IMR-90 (cell line): ENCODE measurements at regions of chr4 and their contacts with region 1.

Region 1: GRCh38 chr4:132240081-132240480 is 909.0 kb upstream of the PCDH10 start:
- DNase-seq: no peak
- ATAC-seq: no peak
- H3K4me3 ChIP-seq: no peak overlapping the region
- H3K27ac ChIP-seq: no peak overlapping the region
- H3K4me1 ChIP-seq: no peaks in the 10 kb centered on the region
- H3K27me3 ChIP-seq: no peaks in the 10 kb centered on the region
- CTCF ChIP-seq: no peak
- POLR2A ChIP-seq: no peak
- RAD21 ChIP-seq: no peak

Region 2: DNA sequence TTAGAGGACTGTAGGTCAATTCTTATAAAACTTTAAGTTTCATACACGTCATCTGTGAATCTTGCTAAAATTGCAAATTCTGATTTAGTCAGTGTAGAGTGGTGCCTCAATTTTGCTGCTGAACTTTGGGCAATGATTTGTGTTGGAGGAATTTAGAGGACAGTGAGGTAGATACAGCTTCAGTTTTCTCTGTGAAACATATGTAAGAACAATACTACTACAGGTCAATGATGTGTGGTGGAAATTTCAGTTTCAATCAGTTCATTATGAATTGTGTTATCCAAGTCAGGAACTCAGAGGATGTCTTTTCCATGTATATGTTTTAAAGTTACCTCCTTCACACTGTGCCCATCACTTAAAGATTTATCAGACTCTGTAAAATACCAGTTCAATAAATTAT is 688.8 kb before region 1 on chr4:
- CTCF ChIA-PET with region 1: no interaction called
- POLR2A ChIA-PET with region 1: no interaction called
- dilution Hi-C with region 1: no loop called
- in situ Hi-C with region 1: no loop called
- intact Hi-C with region 1: no loop called
- DNase-seq: no peak
- ATAC-seq: no peak
- H3K4me3 ChIP-seq: no peak overlapping the region
- H3K27ac ChIP-seq: no peak overlapping the region
- H3K4me1 ChIP-seq: no peaks in the 10 kb centered on the region
- H3K27me3 ChIP-seq: no peaks in the 10 kb centered on the region
- CTCF ChIP-seq: no peak
- POLR2A ChIP-seq: no peak
- RAD21 ChIP-seq: no peak

Region 3: DNA sequence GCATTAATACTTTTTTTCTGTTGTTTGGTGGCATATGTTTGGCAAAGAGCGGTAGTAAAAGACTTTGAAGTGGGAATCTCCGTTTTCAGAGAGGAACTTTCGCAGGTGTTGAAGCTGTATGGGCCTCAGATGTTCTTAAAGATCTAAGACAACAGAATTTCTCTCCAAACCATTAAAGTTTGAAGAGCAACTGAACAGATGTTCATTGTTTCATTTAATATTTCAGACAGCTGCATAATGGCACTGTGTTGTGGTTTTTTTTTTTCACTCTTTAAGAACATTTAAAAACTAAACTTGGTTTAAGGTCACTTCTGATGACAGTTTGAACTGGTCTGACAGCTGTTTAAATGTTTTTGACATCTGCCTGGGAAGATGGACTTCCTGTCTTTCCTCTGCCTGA is 26.3 kb after region 1 on chr4:
- CTCF ChIA-PET with region 1: no interaction called
- POLR2A ChIA-PET with region 1: no interaction called
- dilution Hi-C with region 1: no loop called
- in situ Hi-C with region 1: no loop called
- intact Hi-C with region 1: loop called (anchors 1 kb)
- DNase-seq: no peak
- ATAC-seq: no peak
- H3K4me3 ChIP-seq: no peak overlapping the region
- H3K27ac ChIP-seq: no peak overlapping the region
- H3K4me1 ChIP-seq: no peaks in the 10 kb centered on the region
- H3K27me3 ChIP-seq: no peaks in the 10 kb centered on the region
- CTCF ChIP-seq: no peak
- POLR2A ChIP-seq: no peak
- RAD21 ChIP-seq: no peak